CD8-positive, alpha-beta T cell (primary cell): ENCODE measurements at regions of chr1 and their contacts with region 1.

Region 1: DNA sequence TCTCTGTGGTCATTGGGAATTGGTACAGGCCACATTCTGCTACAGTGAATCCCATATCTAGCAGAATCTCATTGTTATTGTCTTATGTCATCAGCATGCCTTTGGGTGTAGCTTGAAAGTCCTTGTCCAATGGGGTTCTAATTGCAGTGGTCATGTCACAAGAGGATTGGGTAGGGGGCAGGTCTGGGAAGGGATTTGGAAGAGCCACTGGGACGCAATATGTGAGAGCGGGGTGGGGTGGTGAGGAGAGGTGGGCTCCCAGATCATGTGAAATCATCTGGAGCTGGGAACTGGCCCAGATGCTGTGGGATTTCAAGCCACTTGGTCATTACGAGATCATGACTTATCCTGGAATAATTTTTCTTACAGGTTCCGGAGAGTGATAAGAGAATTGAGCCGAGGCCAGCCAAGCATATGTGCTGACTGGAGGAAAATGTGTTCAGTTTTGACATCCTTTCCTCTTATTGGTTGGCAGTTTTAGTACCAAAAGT is 16.3 kb downstream of the CNIH3 start:
- DNase-seq: no peak
- ATAC-seq: no peak
- H3K4me3 ChIP-seq: no peak overlapping the region
- H3K4me3 Mint-ChIP-seq: no peak overlapping the region
- H3K27ac ChIP-seq: no peak overlapping the region
- H3K27ac Mint-ChIP-seq: no peak overlapping the region
- H3K4me1 ChIP-seq: no peaks in the 10 kb centered on the region
- H3K4me1 Mint-ChIP-seq: peaks cover 2% of the 10 kb centered on the region
- H3K27me3 ChIP-seq: peaks cover 0 to 2% of the 10 kb centered on the region in 2 experiments
- H3K27me3 Mint-ChIP-seq: peaks cover 10% of the 10 kb centered on the region
- CTCF ChIP-seq: no peak

Region 2: DNA sequence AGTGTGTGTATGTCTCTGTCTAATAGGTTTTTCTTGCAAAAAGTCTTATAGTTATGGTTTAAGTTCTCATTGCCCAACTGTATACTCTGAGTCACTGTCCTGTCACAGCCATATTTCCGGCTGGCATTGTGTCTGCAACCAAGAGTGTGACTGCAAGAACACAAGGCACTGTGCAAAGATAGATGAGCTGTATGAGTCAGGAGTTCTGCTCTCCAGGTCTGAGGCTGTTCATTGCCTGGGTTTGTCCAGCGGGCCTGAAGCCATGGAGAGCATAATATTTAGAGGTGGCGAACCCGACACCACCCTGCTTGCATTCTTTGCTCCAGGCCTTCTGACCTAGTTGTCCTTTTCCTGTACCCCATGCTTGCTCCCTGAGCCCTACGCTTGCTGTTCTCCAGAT is 67.2 kb before region 1 on chr1:
- CTCF ChIA-PET with region 1: no interaction called
- POLR2A ChIA-PET with region 1: no interaction called
- intact Hi-C with region 1: loop called in 1 of 2 experiments (anchors 5 kb)
- DNase-seq: peak in 1 of 9 experiments; percentile 23
- ATAC-seq: no peak
- H3K4me3 ChIP-seq: no peak overlapping the region
- H3K4me3 Mint-ChIP-seq: no peak overlapping the region
- H3K27ac ChIP-seq: no peak overlapping the region
- H3K27ac Mint-ChIP-seq: no peak overlapping the region
- H3K4me1 ChIP-seq: no peaks in the 10 kb centered on the region
- H3K4me1 Mint-ChIP-seq: no peaks in the 10 kb centered on the region
- H3K27me3 ChIP-seq: no peaks in the 10 kb centered on the region
- H3K27me3 Mint-ChIP-seq: no peaks in the 10 kb centered on the region
- CTCF ChIP-seq: no peak